Colonic mucosa (tissue), 4 donors: ENCODE measurements at regions of chr16 and their contacts with region 1.

Region 1: DNA sequence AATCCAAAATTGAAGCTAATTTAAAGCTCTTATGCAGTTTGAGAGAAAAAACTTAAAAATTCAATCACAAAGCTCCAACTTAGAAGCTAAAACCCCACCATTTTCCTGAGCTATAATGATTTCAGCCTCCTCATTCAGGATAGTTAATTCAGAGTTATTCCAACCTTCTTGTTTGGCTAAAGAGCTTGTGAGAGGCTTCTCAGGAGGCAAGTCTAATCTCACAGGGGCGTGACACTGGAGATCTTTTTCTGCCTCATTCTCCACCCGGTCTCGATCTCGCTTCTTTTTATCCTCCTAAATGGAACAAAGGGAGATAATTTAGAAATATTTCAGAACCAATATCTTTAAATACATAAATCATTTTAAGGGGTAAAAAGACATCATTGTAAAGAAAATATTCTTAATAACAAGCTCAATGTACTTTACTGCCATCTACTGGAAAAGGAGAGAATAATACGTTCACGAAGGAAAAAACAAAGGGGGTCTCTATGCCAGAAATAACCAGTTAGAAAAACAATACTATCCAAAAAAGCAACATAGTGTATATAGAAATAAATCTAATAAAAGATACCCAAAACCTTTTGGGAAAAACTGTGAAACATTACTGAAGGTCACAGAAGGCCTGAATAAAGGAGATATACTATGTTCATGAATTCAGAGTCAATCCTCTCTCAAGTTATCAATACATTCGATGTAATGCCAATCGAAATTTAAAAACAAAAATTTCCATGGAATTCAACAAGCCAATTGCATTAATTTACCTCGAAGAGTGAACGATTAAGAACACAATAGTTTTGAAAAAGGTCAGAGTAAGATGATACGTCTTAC is 13.9 kb downstream of the BRD7 start:
- DNase-seq: no peak
- H3K4me3 ChIP-seq: no peak overlapping the region
- H3K27ac ChIP-seq: no peak overlapping the region
- H3K4me1 ChIP-seq: no peaks in the 10 kb centered on the region
- H3K27me3 ChIP-seq: no peaks in the 10 kb centered on the region
- CTCF ChIP-seq: peak; percentile 62

Region 2: DNA sequence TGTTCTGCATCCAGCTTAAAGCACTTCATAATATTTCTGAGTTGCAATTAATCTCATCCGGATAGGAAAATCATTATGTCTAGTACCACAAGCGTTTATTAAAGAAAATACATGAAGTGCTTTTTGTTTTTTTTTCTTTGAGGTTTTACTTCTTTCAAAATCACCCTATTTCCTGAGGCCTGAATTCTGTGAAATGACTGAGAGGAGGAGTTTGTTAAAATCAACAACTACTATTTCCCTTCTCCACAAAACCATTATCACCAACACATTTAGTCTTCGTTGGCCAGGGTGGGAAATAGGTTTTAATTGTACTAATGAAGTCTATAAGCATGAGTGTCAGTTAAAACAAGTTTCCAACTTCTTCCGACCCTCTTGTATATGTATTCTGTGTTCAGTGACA is 139.2 kb before region 1 on chr16:
- intact Hi-C with region 1: loop called (anchors 5 kb)
- DNase-seq: no peak
- H3K4me3 ChIP-seq: no peak overlapping the region
- H3K27ac ChIP-seq: no peak overlapping the region
- H3K4me1 ChIP-seq: no peaks in the 10 kb centered on the region
- H3K27me3 ChIP-seq: no peaks in the 10 kb centered on the region
- CTCF ChIP-seq: no peak